GM10248 (cell line): ENCODE measurements at regions of chr14 and their contacts with region 1.

Region 1: GRCh38 chr14:23539248-23540140 is 12.1 kb downstream of the ZFHX2 start:
- DNase-seq: peak; percentile 81
- CTCF ChIP-seq: peak; percentile 89

Region 2: GRCh38 chr14:23447361-23448350 is 91.8 kb before region 1 on chr14:
- CTCF ChIA-PET with region 1: no interaction called
- POLR2A ChIA-PET with region 1: no interaction called
- DNase-seq: no peak
- CTCF ChIP-seq: no peak

Region 3: DNA sequence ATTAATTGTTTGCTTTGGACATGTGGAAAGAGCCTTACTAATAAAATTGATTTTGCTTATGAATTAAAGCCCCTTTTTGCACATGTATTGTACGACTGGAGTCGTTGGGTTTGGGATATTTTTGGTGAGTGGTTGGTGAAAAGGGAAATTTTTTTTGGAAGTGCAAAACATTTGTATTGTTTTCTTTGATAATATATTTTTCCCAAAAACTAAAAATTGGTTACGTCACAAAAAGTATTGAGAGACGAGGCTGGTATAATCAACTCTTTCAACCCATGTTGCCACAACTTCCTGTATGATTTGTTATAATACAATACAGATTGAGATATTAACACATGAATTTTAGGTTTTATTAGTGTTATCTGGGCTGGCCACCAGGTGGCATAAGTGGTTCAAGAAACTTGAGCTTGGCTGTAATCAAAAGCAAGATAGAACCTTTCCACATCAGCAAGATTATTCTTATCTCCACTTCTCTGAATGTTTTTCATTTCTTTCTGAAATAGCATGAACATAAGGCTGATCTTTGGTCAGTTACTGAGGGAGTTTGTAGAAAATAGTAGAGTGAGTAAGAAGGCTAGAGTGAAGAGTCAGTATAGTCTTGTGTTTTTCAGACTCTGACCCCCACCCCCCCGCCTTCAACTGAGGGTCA is 61.3 kb before region 1 on chr14:
- CTCF ChIA-PET with region 1: interaction called, 59 read pairs
- POLR2A ChIA-PET with region 1: no interaction called
- DNase-seq: peak; percentile 50
- CTCF ChIP-seq: peak; percentile 60

Region 4: GRCh38 chr14:23483236-23483854 is 56.1 kb before region 1 on chr14:
- CTCF ChIA-PET with region 1: interaction called, 59 read pairs
- POLR2A ChIA-PET with region 1: no interaction called
- DNase-seq: peak; percentile 33
- CTCF ChIP-seq: peak; percentile 31

Region 5: DNA sequence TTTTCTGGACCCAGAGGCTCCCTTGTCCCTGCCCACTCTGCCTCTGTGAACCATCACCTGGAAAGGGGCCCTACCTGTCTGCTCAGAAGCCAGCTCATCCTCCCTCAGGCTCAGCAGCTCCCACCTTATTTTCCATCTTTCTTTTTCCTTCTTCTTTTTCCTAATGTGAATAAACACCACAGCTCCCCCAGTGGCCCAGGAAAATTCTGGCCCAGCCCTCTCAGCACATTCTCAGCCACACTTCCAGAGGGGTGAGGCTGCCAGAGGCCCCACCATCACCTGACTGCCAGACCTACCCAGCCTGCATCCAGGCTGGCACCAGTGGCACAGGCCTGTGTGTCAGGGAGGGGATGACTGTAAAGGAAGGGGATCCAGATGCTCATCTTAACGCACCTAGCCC is 10.9 kb before region 1 on chr14:
- CTCF ChIA-PET with region 1: interaction called, 20 read pairs
- POLR2A ChIA-PET with region 1: no interaction called
- DNase-seq: no peak
- CTCF ChIP-seq: no peak

Region 6: DNA sequence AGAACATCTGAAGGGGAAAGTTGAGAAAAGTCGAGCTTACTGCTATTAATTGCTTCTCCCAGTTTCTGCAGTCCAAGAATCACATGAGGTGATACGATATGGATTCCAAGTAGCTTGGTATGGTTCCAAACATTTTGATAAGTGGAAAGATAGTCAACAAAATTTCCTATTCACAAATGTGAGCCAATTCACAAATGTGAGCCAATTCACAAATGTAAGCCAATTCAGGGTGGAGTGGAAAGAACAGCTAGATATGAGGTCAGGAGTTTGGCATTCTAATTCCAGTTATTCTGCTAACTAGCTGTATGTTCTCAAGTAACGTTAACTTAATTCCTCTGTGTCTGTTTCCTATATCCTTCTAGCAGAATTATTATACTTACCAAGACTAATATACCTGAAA is 376.5 kb after region 1 on chr14:
- CTCF ChIA-PET with region 1: no interaction called
- POLR2A ChIA-PET with region 1: no interaction called
- DNase-seq: no peak
- CTCF ChIP-seq: no peak